ENCODE measurements at regions of chr10 and their contacts with region 1.

Region 1: GRCh38 chr10:63166742-63167258 is 33.7 kb downstream of the NRBF2 start:
- DNase-seq: peak; percentile 83
- H3K4me3 Mint-ChIP-seq: no peak overlapping the region
- H3K27ac Mint-ChIP-seq: no peak overlapping the region
- H3K4me1 Mint-ChIP-seq: no peaks in the 10 kb centered on the region
- H3K27me3 Mint-ChIP-seq: no peaks in the 10 kb centered on the region
- CTCF ChIP-seq: peak; percentile 68

Region 2: DNA sequence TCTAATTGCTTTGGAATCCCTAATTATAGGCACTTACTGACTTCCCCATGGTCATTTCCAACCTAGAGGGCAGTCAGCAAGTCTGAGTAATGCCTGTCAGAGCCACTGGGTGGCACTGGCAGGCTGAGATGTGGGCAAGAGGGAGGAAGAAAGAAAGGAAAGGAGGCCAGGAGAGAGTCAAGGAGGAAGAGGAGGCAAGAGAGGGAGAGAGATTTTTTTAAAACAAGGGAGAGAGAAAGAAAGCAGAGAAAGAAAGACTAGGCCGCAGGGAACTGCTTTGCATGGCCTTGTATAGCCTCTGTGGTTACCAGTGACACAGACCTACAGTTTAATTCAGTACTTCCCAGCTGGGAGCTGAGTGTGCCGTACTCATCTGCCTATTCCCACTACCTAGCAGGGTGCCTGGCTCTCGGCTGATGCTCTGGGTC is 572.7 kb before region 1 on chr10:
- CTCF ChIA-PET with region 1: interaction called, 105 read pairs
- POLR2A ChIA-PET with region 1: no interaction called
- intact Hi-C with region 1: no loop called
- DNase-seq: peak; percentile 64
- H3K4me3 Mint-ChIP-seq: no peak overlapping the region
- H3K27ac Mint-ChIP-seq: no peak overlapping the region
- H3K4me1 Mint-ChIP-seq: peaks cover 6% of the 10 kb centered on the region
- H3K27me3 Mint-ChIP-seq: no peaks in the 10 kb centered on the region
- CTCF ChIP-seq: peak; percentile 87

Region 3: DNA sequence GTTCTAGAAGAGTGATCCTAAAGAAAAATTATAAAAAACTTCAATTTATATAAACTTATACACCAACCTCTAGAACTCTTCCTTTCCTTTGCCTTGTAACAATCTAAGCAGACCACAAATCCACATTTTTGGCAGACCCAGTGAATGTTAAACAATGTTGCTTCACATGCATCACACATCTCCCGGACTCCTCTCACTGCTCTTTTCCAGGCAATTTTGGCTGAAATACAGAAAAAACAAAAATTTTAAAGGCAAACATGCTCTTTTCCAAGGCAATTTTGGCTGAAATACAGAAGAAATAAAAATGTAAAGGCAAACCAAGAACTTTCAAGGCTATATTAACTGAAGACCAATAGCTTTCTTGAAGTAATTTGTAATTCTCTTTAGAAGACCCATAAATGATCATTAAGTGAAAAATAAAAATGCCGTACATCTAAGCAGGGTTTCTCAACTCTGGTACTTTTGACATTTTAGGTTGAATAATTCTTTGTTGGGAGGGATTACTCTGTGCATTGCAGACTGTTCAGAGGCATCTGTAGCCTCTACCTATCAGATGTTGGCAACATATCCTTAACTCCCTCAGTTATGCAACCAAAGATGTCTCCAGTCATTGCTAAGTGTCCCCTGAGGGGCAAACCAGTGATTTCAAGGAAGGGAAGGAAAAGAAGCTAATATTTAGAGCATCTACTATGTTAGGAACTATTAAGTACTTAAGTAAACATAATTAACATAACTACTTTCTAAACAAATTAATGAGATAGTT is 30.7 kb after region 1 on chr10:
- CTCF ChIA-PET with region 1: interaction called, 11 read pairs
- POLR2A ChIA-PET with region 1: no interaction called
- intact Hi-C with region 1: no loop called
- DNase-seq: peak; percentile 61
- H3K4me3 Mint-ChIP-seq: no peak overlapping the region
- H3K27ac Mint-ChIP-seq: no peak overlapping the region
- H3K4me1 Mint-ChIP-seq: peaks cover 9% of the 10 kb centered on the region
- H3K27me3 Mint-ChIP-seq: no peaks in the 10 kb centered on the region
- CTCF ChIP-seq: no peak

Region 4: GRCh38 chr10:63707254-63707910 is 540.6 kb after region 1 on chr10:
- CTCF ChIA-PET with region 1: interaction called, 11 read pairs
- POLR2A ChIA-PET with region 1: interaction called, 14 read pairs
- intact Hi-C with region 1: no loop called
- DNase-seq: peak; percentile 98
- H3K4me3 Mint-ChIP-seq: no peak overlapping the region
- H3K27ac Mint-ChIP-seq: peak overlapping the region; percentile 61
- H3K4me1 Mint-ChIP-seq: peaks cover 42% of the 10 kb centered on the region
- H3K27me3 Mint-ChIP-seq: no peaks in the 10 kb centered on the region
- CTCF ChIP-seq: no peak

Region 5: GRCh38 chr10:63767138-63767801 is 600.5 kb after region 1 on chr10:
- CTCF ChIA-PET with region 1: interaction called, 31 read pairs
- POLR2A ChIA-PET with region 1: interaction called, 3 read pairs
- intact Hi-C with region 1: loop called (anchors 1 kb)
- DNase-seq: peak; percentile 29
- H3K4me3 Mint-ChIP-seq: no peak overlapping the region
- H3K27ac Mint-ChIP-seq: no peak overlapping the region
- H3K4me1 Mint-ChIP-seq: peaks cover 13% of the 10 kb centered on the region
- H3K27me3 Mint-ChIP-seq: peaks cover under 1% of the 10 kb centered on the region
- CTCF ChIP-seq: peak; percentile 39

Region 6: DNA sequence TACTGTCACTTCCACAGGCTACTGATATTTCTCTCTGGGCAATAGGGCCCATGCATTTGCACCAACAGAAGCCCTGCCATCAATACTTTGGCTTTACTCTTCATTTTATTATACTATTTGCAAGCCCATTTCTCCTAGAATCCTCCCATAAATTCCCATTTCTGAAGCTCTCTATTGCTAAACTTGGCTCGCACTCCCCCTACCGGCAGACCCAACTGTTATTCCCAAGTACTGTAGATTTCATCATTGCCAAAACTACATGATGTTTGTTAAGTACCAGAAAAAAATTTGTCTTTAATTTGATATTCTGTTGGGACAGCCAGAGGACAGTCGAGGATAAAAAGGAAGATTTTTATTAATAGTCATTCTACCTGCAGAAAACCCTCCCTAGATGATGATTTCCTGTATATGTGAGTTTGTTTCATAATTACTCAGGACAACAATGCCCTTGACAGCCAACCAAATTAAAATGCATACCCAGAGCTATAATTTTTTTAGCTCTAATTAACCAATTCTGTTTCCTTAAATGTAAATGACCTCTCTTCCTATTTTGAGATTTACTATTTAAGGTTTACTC is 653.0 kb after region 1 on chr10:
- CTCF ChIA-PET with region 1: interaction called, 12 read pairs
- POLR2A ChIA-PET with region 1: no interaction called
- intact Hi-C with region 1: no loop called
- DNase-seq: peak; percentile 74
- H3K4me3 Mint-ChIP-seq: no peak overlapping the region
- H3K27ac Mint-ChIP-seq: no peak overlapping the region
- H3K4me1 Mint-ChIP-seq: no peaks in the 10 kb centered on the region
- H3K27me3 Mint-ChIP-seq: peaks cover 11% of the 10 kb centered on the region
- CTCF ChIP-seq: peak; percentile 64